K562 (cell line): ENCODE measurements at regions of chr18 and their contacts with region 1.

Region 1: DNA sequence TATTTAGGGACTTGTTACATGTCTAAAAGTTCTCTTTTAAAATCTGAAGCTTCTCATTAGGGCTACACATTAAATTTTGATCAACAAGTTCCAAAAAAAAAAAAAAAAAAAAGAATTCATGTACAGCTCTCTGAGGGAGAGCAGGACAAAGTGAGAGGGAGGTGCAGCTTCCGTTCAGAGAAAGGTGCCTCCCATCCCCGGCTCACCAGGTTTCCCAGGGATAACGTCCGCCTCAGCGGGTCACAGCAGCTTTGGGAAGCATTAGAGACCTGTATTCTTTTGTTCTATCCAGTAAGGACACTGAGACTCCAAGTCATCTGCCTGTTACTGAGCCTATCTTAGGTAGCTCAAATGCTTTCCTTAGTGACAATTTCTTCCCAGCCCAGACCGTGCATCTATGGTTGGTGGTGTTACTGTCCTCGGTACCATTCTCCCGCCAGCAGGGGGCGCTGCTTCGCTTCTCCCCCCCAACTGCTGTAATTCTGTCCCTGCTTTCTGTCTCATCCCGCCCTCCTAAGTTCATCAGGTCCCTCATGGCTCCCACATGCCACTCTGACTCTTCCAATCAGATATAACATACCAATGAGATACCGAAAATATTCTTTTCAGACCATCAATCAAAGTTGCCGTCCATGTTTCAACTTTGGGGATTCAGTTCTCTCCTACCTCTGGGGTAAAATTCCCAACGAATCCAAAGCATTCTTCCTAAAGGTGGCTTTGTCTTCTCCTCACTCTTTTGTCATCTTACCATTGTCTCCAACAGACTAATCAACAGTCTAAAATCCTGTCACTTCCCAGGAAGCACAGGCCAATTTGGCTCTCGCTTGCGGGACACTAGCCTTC is 466.5 kb downstream of the METTL4 start:
- DNase-seq: peak; percentile 84 to 88 (median 86)
- ATAC-seq: peak; percentile 99
- H3K4me3 ChIP-seq: no peak overlapping the region
- H3K27ac ChIP-seq: no peak overlapping the region
- H3K4me1 ChIP-seq: no peaks in the 10 kb centered on the region
- H3K27me3 ChIP-seq: no peaks in the 10 kb centered on the region
- CTCF ChIP-seq: peak; percentile 83 to 94 (median 86)
- EP300 ChIP-seq: no peak
- POLR2A ChIP-seq: no peak
- RAD21 ChIP-seq: peak; percentile 93 to 96

Region 2: DNA sequence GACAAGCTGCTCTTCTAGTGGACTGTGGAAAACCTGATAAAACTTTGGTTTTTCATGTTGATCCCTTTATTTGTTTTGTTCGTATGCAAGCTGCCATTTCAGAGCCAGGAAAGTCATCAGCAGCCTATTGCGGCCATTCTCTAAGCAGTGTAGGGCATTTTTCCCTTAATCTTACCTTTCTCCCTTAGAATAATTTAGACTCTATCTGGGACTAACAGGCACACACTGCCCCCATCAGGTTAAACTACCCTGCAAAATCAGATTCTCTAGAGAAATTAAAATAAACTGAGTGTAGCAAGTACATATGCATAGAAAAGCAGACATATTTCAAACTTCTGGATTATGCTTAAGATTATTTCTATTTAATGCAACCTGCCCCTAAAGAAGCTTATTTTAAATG is 119.0 kb after region 1 on chr18:
- CTCF ChIA-PET with region 1: no interaction called
- POLR2A ChIA-PET with region 1: no interaction called
- in situ Hi-C with region 1: no loop called
- intact Hi-C with region 1: loop called (anchors 1 kb)
- DNase-seq: peak in 2 of 4 experiments; percentile 29 to 61
- ATAC-seq: peak; percentile 89
- H3K4me3 ChIP-seq: no peak overlapping the region
- H3K27ac ChIP-seq: no peak overlapping the region
- H3K4me1 ChIP-seq: no peaks in the 10 kb centered on the region
- H3K27me3 ChIP-seq: no peaks in the 10 kb centered on the region
- CTCF ChIP-seq: peak; percentile 51 to 76 (median 55); a peak in 5 of 6 replicates
- EP300 ChIP-seq: no peak
- POLR2A ChIP-seq: no peak
- RAD21 ChIP-seq: peak; percentile 71 to 74

Region 3: DNA sequence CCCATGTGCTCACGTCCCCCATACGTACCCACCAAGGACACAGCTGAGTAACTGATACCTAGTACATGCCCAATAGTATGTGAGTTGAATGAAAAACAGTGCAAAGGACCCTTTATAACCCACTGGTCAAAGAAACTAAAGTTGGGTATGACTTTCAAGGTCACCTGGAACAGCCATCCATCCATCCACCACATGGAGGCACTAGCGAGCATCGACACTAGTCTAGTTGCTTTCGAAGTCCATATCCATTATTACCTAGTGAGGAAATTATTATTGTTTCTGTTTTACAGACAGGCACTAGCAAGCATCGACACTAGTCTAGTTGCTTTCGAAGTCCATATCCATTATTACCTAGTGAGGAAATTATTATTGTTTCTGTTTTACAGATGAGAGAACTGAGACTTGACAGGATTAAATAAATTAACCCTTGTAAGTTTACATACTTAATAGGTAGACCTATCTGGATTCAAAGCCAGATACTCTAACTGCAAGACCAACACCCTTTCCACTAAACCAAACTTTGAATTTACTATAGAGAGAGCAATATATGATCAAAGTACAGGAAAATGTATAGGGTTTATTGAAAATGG is 232.8 kb after region 1 on chr18:
- CTCF ChIA-PET with region 1: no interaction called
- POLR2A ChIA-PET with region 1: no interaction called
- in situ Hi-C with region 1: no loop called
- intact Hi-C with region 1: loop called (anchors 10 kb)
- DNase-seq: peak; percentile 30 to 60 (median 40)
- ATAC-seq: peak; percentile 72
- H3K4me3 ChIP-seq: no peak overlapping the region
- H3K27ac ChIP-seq: no peak overlapping the region; the same call in 1 of the 3 replicates
- H3K4me1 ChIP-seq: peaks cover 4 to 13% of the 10 kb centered on the region in 2 experiments; a peak in 2 of 5 replicates
- H3K27me3 ChIP-seq: no peaks in the 10 kb centered on the region
- CTCF ChIP-seq: peak; percentile 40 to 71 (median 41); a peak in 4 of 6 replicates
- EP300 ChIP-seq: no peak
- POLR2A ChIP-seq: no peak
- RAD21 ChIP-seq: peak; percentile 17 to 59; a peak in 3 of 4 replicates

Region 4: DNA sequence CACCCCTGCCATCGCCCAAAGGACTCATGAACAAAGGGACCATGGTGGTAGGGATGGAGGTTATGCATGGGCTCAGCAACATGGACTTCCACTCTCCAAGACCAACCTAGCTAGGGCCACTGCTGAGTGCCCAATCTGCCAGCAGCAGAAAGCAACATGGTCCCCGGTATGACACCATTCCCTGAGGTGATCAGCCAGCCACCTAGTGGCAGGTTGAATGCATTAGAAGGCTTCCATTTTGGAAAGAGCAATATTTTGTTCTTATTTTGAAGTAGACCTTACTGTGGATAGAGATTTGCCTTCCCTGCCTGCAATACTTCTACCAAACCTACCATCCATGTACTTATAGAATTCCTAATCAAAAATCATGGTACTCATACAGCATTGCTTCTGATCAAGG is 366.7 kb after region 1 on chr18:
- CTCF ChIA-PET with region 1: interaction called, 10 read pairs
- POLR2A ChIA-PET with region 1: no interaction called
- in situ Hi-C with region 1: no loop called
- intact Hi-C with region 1: loop called (anchors 1 kb)
- DNase-seq: peak; percentile 16 to 62 (median 30)
- ATAC-seq: peak; percentile 94
- H3K4me3 ChIP-seq: no peak overlapping the region
- H3K27ac ChIP-seq: no peak overlapping the region
- H3K4me1 ChIP-seq: no peaks in the 10 kb centered on the region
- H3K27me3 ChIP-seq: no peaks in the 10 kb centered on the region; a peak in 1 of 5 replicates
- CTCF ChIP-seq: peak; percentile 66 to 80 (median 75)
- EP300 ChIP-seq: no peak
- POLR2A ChIP-seq: no peak
- RAD21 ChIP-seq: peak; percentile 44 to 77

Region 5: DNA sequence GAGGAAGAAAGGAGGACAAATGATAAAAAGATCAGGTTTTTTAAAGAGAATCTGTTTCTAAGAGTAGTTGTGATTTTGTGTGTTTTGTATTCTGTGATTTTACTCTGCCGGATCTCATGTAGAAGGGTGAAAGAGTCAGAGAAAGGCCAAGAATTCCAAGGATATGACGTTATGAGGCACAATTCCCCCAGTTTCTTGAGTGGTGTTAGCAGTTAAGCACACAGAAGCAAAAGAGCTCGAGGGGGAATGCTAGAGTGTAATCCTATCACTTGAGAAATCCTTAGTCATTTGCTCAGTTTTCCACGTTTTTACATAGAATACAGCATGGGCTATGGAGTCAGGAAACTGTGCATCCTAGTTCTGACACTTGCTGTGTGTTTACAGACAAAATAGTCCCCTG is 431.7 kb after region 1 on chr18:
- CTCF ChIA-PET with region 1: interaction called, 12 read pairs
- POLR2A ChIA-PET with region 1: no interaction called
- in situ Hi-C with region 1: loop called (anchors 5 kb)
- intact Hi-C with region 1: no loop called
- DNase-seq: no peak
- ATAC-seq: no peak
- H3K4me3 ChIP-seq: no peak overlapping the region
- H3K27ac ChIP-seq: no peak overlapping the region
- H3K4me1 ChIP-seq: no peaks in the 10 kb centered on the region
- H3K27me3 ChIP-seq: no peaks in the 10 kb centered on the region
- CTCF ChIP-seq: no peak
- EP300 ChIP-seq: no peak
- POLR2A ChIP-seq: no peak
- RAD21 ChIP-seq: no peak

Region 6: GRCh38 chr18:2655178-2655953 is 550.5 kb after region 1 on chr18 and contains the start of gene SMCHD1:
- CTCF ChIA-PET with region 1: no interaction called
- POLR2A ChIA-PET with region 1: no interaction called
- in situ Hi-C with region 1: no loop called
- intact Hi-C with region 1: no loop called
- DNase-seq: peak; percentile 93 to 95 (median 94)
- ATAC-seq: peak; percentile 83
- H3K4me3 ChIP-seq: peak within 1 kb of the TSS; percentile 86
- H3K27ac ChIP-seq: peak within 1 kb of the TSS; percentile 94
- H3K4me1 ChIP-seq: peaks cover 16 to 24% of the 10 kb centered on the region in 2 experiments; a peak in 4 of 5 replicates
- H3K27me3 ChIP-seq: no peaks in the 10 kb centered on the region
- CTCF ChIP-seq: 0 out of 6 replicates have a peak, but pooled peaks of 1 of the 3 experiments have one; percentile 3
- EP300 ChIP-seq: no peak
- POLR2A ChIP-seq: peak; percentile 98
- RAD21 ChIP-seq: no peak
- polyA plus RNA-seq, gene SMCHD1: 6.3 to 6.6 TPM